ENCODE measurements at regions of chr12 and their contacts with region 1.

Region 1: GRCh38 chr12:27142101-27142721 is 59.8 kb upstream of the C12orf71 start:
- DNase-seq: no peak
- H3K4me3 ChIP-seq: no peak overlapping the region
- H3K27ac ChIP-seq: no peak overlapping the region
- H3K4me1 ChIP-seq: peaks cover 0 to 25% (median 12%) of the 10 kb centered on the region in 6 donors
- H3K27me3 ChIP-seq: no peaks in the 10 kb centered on the region
- CTCF ChIP-seq: peak in 10 of 11 experiments; percentile 22 to 83 (median 70)
- POLR2A ChIP-seq: no peak

Region 2: DNA sequence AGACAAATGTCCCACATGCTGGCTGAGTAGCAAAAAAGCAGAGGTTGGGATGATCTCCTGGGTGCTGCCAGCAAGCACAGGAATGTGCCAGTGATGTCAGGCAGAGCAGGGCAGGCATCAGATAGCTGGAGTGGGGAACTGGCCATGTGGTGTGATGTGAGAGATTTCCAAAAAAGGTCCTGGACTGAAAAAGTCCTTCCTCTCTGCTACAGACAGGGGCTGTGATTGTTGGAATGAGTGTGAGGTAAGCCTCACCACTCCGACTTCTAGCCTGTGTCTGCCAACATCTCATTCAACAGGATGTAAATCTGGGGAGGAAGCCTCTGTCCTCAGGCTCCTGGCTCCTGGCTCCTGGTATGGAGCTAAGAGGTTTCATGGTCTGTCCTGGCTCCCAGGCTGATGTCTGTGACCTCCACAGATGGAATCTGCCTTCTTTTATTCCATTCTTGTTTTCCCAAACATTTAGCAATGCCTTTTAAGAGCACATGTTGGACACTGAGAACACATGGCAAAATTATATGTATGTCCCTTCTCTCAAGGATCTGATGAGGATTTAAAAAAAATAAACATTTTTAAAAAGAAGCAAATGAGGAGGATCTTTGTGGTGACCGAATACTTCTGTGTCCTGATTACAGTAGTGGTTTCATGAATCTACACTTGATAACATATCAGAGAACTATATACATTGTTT is 51.8 kb after region 1 on chr12:
- intact Hi-C with region 1: no loop called
- DNase-seq: no peak
- H3K4me3 ChIP-seq: no peak overlapping the region
- H3K27ac ChIP-seq: no peak overlapping the region
- H3K4me1 ChIP-seq: no peaks in the 10 kb centered on the region
- H3K27me3 ChIP-seq: no peaks in the 10 kb centered on the region
- CTCF ChIP-seq: no peak
- POLR2A ChIP-seq: no peak

Region 3: DNA sequence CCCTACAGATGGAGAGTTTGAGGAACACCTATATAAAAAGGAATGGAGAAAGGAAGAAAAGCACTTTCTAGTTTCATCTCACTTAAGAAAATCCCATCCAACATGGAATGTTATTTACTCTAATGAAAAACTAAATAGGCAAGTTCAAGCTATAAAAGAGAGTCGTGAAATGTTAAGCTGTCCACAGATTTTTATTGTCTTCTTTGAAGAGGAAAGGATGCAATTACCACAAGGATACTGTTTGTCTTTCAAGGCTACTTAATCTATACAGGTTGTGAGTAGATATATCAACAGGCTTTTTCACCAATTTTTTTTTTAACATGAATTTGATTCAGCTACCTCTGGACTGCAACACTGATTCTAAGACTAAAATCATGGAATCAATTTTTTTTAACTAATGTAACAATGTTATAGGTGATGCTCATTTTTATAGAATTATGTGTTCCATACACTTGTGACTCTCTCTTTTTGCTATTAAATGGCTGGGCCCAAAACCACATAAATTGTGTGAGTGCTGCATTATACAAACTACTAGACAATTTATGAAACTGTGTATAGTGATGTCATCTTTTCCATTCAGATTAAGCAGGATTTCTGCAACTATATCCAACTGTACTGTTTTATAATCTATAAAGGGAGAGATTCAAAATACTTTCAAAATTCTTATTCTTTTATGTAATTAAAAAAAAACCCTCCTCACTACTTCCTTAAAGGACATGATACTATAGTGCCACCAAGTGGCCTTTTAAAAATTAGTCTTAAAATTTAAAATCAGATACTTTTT is 163.7 kb after region 1 on chr12:
- intact Hi-C with region 1: loop called (anchors 10 kb)
- DNase-seq: no peak
- H3K4me3 ChIP-seq: no peak overlapping the region
- H3K27ac ChIP-seq: no peak overlapping the region
- H3K4me1 ChIP-seq: peaks cover 0 to 11% (median 3%) of the 10 kb centered on the region in 6 donors
- H3K27me3 ChIP-seq: no peaks in the 10 kb centered on the region
- CTCF ChIP-seq: peak in 6 of 11 experiments; percentile 29 to 57 (median 38)
- POLR2A ChIP-seq: no peak